Motor neuron (in vitro differentiated cells): ENCODE measurements at regions of chr12 and their contacts with region 1.

Region 1: GRCh38 chr12:84874125-84874824 is 38.3 kb downstream of the SLC6A15 start:
- ATAC-seq: peak; percentile 62 to 92 (median 79)
- H3K4me3 ChIP-seq: no peak overlapping the region
- H3K27ac ChIP-seq: no peak overlapping the region
- H3K4me1 ChIP-seq: no peaks in the 10 kb centered on the region

Region 2: DNA sequence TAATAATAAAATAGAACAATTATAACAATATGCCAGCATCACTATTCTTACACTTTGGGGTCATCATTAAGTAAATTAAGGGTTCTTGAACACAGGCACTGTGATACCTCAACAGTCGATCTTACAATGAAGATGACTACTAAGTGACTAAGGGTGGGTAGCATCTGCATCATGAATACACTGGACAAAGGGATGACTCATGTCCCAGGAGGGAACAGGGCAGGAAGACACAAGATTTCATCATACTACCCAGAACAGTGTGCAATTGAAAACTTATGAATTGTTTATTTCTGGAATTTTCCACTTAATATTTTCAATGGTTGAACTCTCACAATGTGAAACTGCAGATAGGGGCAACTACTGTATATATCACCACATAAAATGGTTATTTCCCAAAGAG is 142.1 kb after region 1 on chr12:
- in situ Hi-C with region 1: loop called in 6 of 9 experiments (anchors 10 to 25 kb)
- ATAC-seq: peak; percentile 47 to 100 (median 100)
- H3K4me3 ChIP-seq: no peak overlapping the region
- H3K27ac ChIP-seq: no peak overlapping the region
- H3K4me1 ChIP-seq: peaks cover 11 to 12% of the 10 kb centered on the region in 2 donors

Region 3: GRCh38 chr12:85029456-85029855 is 155.2 kb after region 1 on chr12:
- in situ Hi-C with region 1: loop called (anchors 5 to 25 kb)
- ATAC-seq: peak in 3 of 8 experiments; percentile 27 to 47 (median 29)
- H3K4me3 ChIP-seq: no peak overlapping the region
- H3K27ac ChIP-seq: no peak overlapping the region
- H3K4me1 ChIP-seq: no peaks in the 10 kb centered on the region

Region 4: DNA sequence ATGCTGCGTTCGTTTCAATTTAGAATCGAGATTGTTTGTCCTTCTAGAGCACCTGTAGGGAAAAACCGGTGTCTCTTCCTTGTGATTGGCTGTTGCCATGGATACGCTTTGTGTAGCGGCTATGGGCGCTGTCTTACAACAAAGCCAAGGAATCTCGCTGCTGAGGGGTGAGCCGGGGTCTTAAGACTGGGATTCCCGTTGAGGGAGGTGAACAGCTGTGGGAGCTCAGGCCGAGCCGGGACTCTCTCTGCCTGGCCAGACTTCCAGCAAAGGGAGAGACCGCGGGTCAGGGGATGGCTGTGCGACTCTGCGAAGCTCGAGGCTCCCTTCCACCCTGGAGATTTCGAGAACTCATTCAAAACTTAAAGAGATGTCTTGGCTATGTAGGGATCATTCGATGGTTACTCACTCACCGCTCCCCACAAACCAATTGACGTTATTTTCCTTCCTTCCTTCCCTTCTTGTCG is 162.0 kb after region 1 on chr12 and contains the starts of genes LRRIQ1 and TSPAN19:
- in situ Hi-C with region 1: loop called in 2 of 9 experiments (anchors 25 kb)
- ATAC-seq: peak; percentile 98 to 100 (median 99)
- H3K4me3 ChIP-seq: peak within 1 kb of the TSS; percentile 48 to 90 (median 82)
- H3K27ac ChIP-seq: no peak within 1 kb of the TSS
- H3K4me1 ChIP-seq: no peaks in the 10 kb centered on the region
- total RNA-seq, gene LRRIQ1: 0.15 to 34.1 (median 3.6) TPM
- total RNA-seq, gene TSPAN19: 0.62 to 3.1 (median 1.0) TPM in 5 of 8 experiments, not detected in the others